ENCODE measurements at regions of chr12 and their contacts with region 1.

Region 1: GRCh38 chr12:125533434-125534029 is 468.3 kb downstream of the AACS start:
- DNase-seq: no peak
- H3K4me3 ChIP-seq: peak overlapping the region in 1 of 4 donors; percentile 1
- H3K27ac ChIP-seq: no peak overlapping the region
- H3K4me1 ChIP-seq: peaks cover 0 to 8% (median 2%) of the 10 kb centered on the region in 4 donors
- H3K27me3 ChIP-seq: peaks cover 0 to 22% (median 0%) of the 10 kb centered on the region in 3 donors
- CTCF ChIP-seq: peak in 3 of 4 experiments; percentile 39 to 66 (median 55)
- EP300 ChIP-seq: no peak
- POLR2A ChIP-seq: no peak

Region 2: DNA sequence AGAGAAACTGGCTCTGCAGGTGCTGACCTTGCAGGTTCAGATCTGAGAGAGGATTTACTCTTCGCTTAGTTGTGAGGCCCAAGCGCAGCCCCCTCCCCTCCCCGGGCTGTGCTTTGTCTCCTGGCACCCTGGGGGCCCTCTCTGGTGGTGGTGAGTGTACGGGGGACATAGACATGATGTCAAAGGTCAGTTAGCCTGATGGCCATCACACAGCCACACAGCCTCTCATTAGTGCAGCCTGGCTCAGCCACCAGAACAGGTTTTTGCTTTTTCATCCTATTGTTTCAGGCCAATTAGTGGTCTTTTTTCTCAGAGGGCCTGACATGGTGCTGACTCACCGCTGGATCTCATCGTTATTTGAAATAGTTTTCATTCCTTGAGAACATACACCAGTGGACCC is 30.4 kb before region 1 on chr12:
- intact Hi-C with region 1: no loop called
- DNase-seq: no peak
- H3K4me3 ChIP-seq: no peak overlapping the region
- H3K27ac ChIP-seq: no peak overlapping the region
- H3K4me1 ChIP-seq: no peaks in the 10 kb centered on the region
- H3K27me3 ChIP-seq: no peaks in the 10 kb centered on the region
- CTCF ChIP-seq: no peak
- EP300 ChIP-seq: no peak
- POLR2A ChIP-seq: no peak

Region 3: GRCh38 chr12:125773033-125773640 is 239.6 kb after region 1 on chr12:
- intact Hi-C with region 1: loop called (anchors 10 kb)
- DNase-seq: peak; percentile 66
- H3K4me3 ChIP-seq: no peak overlapping the region
- H3K27ac ChIP-seq: no peak overlapping the region
- H3K4me1 ChIP-seq: no peaks in the 10 kb centered on the region
- H3K27me3 ChIP-seq: no peaks in the 10 kb centered on the region
- CTCF ChIP-seq: no peak
- EP300 ChIP-seq: no peak
- POLR2A ChIP-seq: no peak

Region 4: GRCh38 chr12:127101076-127101475 is 1567.5 kb after region 1 on chr12:
- intact Hi-C with region 1: no loop called
- DNase-seq: no peak
- H3K4me3 ChIP-seq: no peak overlapping the region
- H3K27ac ChIP-seq: no peak overlapping the region
- H3K4me1 ChIP-seq: no peaks in the 10 kb centered on the region
- H3K27me3 ChIP-seq: no peaks in the 10 kb centered on the region
- CTCF ChIP-seq: no peak
- EP300 ChIP-seq: no peak
- POLR2A ChIP-seq: no peak

Measured in sigmoid colon (tissue), 7 donors.